PC-9 (cell line): ENCODE measurements at regions of chr15 and their contacts with region 1.

Region 1: GRCh38 chr15:91302588-91303439 is 202.8 kb downstream of the SV2B start:
- DNase-seq: peak; percentile 29 to 61
- H3K4me3 ChIP-seq: no peak overlapping the region
- H3K27ac ChIP-seq: no peak overlapping the region
- H3K4me1 ChIP-seq: 0 out of 2 replicates have a peak, but pooled peaks cover 4% of the 10 kb centered on the region
- H3K27me3 ChIP-seq: no peaks in the 10 kb centered on the region
- CTCF ChIP-seq: peak; percentile 86

Region 2: GRCh38 chr15:91522663-91523332 is 220.0 kb after region 1 on chr15:
- CTCF ChIA-PET with region 1: no interaction called
- POLR2A ChIA-PET with region 1: no interaction called
- intact Hi-C with region 1: loop called (anchors 1 kb)
- DNase-seq: no peak
- H3K4me3 ChIP-seq: no peak overlapping the region
- H3K27ac ChIP-seq: peak overlapping the region; percentile 56
- H3K4me1 ChIP-seq: peaks cover 9% of the 10 kb centered on the region
- H3K27me3 ChIP-seq: no peaks in the 10 kb centered on the region
- CTCF ChIP-seq: peak; percentile 48

Region 3: GRCh38 chr15:91593067-91593466 is 290.3 kb after region 1 on chr15:
- CTCF ChIA-PET with region 1: interaction called, 9 read pairs
- POLR2A ChIA-PET with region 1: no interaction called
- intact Hi-C with region 1: loop called (anchors 10 kb)
- DNase-seq: no peak
- H3K4me3 ChIP-seq: no peak overlapping the region
- H3K27ac ChIP-seq: peak overlapping the region; percentile 49
- H3K4me1 ChIP-seq: peaks cover 12% of the 10 kb centered on the region
- H3K27me3 ChIP-seq: no peaks in the 10 kb centered on the region
- CTCF ChIP-seq: no peak

Region 4: DNA sequence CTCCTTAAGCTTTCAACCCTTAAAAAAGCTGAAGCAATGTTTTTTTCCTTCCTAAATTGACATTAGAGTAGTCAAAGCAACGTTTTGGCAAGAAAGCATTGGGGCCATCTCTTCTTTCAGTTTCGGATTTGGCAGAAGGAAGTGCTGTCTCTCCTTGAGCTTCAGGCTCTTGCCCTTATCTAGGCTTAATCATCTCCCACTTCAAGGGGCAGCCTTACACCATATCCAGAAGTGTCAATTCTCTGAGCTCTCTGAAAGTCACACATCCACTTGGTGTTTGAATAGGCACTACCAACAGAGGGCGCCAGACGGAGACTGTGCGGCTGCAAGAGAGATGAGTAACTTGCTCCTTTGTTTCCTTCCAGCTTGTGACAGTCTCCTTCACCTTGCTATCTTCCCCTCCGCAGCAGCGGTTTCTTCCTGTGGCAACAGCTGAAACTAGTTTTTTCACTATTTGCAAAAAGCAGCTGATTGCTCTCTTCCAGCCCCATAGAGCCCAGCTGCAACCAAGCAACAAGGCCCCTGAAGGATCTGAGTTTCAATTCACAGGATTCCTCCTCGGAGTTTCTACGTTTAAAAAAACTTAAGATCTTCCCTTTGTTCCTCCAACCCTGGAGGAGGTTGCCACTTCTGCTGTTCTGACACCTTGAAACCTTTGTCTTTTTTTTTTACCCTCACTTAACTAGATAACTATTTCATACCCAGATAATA is 403.7 kb after region 1 on chr15:
- CTCF ChIA-PET with region 1: interaction called, 4 read pairs
- POLR2A ChIA-PET with region 1: no interaction called
- intact Hi-C with region 1: loop called (anchors 1 kb)
- DNase-seq: peak; percentile 57 to 60
- H3K4me3 ChIP-seq: no peak overlapping the region
- H3K27ac ChIP-seq: no peak overlapping the region
- H3K4me1 ChIP-seq: peaks cover 14% of the 10 kb centered on the region
- H3K27me3 ChIP-seq: no peaks in the 10 kb centered on the region
- CTCF ChIP-seq: peak; percentile 92

Region 5: DNA sequence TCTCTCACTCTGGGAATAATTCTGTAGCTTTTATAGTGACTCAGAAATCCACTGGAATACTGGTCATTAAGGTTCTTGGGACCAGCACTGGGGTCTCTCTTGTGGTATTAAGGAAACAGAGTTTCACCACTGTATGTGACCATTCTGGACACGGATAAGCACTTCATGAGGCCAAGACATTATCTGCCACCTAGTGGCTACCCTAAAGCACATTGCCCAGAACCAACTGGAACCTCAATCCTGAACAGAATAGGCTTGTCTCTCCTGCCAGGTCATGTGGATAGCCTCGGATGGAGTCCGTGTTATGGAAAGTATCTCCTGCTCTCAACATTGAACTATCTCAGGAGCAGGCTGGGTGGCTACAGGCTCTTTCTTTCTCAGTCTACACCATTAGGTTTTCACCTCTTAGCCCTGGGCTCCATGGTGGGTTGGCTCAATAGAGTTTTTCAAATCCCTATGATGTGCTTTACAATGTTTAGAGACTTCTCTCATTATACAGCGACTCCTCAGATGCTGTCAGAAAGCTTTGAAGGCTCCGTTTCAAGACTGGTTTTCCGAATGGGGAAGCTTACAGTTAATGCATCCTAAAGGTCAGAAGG is 923.3 kb after region 1 on chr15:
- CTCF ChIA-PET with region 1: no interaction called
- POLR2A ChIA-PET with region 1: no interaction called
- intact Hi-C with region 1: loop called (anchors 5 kb)
- DNase-seq: no peak
- H3K4me3 ChIP-seq: no peak overlapping the region
- H3K27ac ChIP-seq: no peak overlapping the region
- H3K4me1 ChIP-seq: no peaks in the 10 kb centered on the region
- H3K27me3 ChIP-seq: 0 out of 2 replicates have a peak, but pooled peaks cover 6% of the 10 kb centered on the region
- CTCF ChIP-seq: peak; percentile 62